ENCODE measurements at regions of chr4 and their contacts with region 1.

Region 1: GRCh38 chr4:129362674-129363274 is 266.8 kb downstream of the C4orf33 start:
- DNase-seq: peak; percentile 57
- ATAC-seq: peak; percentile 63; the same call in 1 of the 2 replicates
- H3K4me3 ChIP-seq: no peak overlapping the region
- H3K27ac ChIP-seq: no peak overlapping the region
- H3K4me1 ChIP-seq: peaks cover 8 to 9% of the 10 kb centered on the region in 2 experiments; a peak in 3 of 4 replicates
- H3K27me3 ChIP-seq: no peaks in the 10 kb centered on the region
- CTCF ChIP-seq: peak; percentile 45 to 88 (median 69); a peak in 5 of 6 replicates
- POLR2A ChIP-seq: no peak
- RAD21 ChIP-seq: peak; percentile 86

Region 2: GRCh38 chr4:129641179-129641578 is 278.4 kb after region 1 on chr4:
- CTCF ChIA-PET with region 1: interaction called, 12 read pairs
- POLR2A ChIA-PET with region 1: no interaction called
- RAD21 ChIA-PET with region 1: interaction called in 1 of 2 experiments, 3 read pairs
- intact Hi-C with region 1: loop called (anchors 1 kb)
- DNase-seq: peak; percentile 42
- ATAC-seq: peak; percentile 75
- H3K4me3 ChIP-seq: no peak overlapping the region
- H3K27ac ChIP-seq: no peak overlapping the region
- H3K4me1 ChIP-seq: no peaks in the 10 kb centered on the region
- H3K27me3 ChIP-seq: no peaks in the 10 kb centered on the region
- CTCF ChIP-seq: peak; percentile 56 to 86 (median 74); a peak in 5 of 6 replicates
- POLR2A ChIP-seq: no peak
- RAD21 ChIP-seq: peak; percentile 55

Region 3: DNA sequence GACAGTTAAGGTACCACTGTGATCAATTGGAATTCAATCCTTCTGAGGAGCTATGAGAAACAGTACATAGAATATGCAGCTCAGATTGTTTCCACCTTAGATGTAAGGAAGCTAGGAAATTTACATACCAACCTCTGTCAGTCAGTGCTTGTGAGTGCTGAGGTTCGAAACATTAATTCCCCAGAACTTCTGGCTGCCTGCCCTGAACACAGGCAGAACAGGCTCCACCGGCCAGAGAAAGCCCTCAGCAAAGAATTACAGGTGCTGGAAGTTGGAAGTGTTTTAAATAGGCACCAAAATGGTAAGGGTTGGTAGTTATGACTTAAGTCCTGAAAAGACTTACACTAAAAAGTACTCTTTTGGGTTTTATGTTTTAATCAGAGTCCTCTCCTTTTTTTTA is 385.0 kb after region 1 on chr4:
- CTCF ChIA-PET with region 1: interaction called, 4 read pairs
- POLR2A ChIA-PET with region 1: no interaction called
- RAD21 ChIA-PET with region 1: no interaction called
- intact Hi-C with region 1: loop called (anchors 10 kb)
- DNase-seq: no peak
- ATAC-seq: no peak
- H3K4me3 ChIP-seq: no peak overlapping the region
- H3K27ac ChIP-seq: no peak overlapping the region
- H3K4me1 ChIP-seq: no peaks in the 10 kb centered on the region
- H3K27me3 ChIP-seq: no peaks in the 10 kb centered on the region
- CTCF ChIP-seq: no peak
- POLR2A ChIP-seq: no peak
- RAD21 ChIP-seq: no peak

Region 4: GRCh38 chr4:129929052-129929451 is 566.3 kb after region 1 on chr4:
- CTCF ChIA-PET with region 1: interaction called, 7 read pairs
- POLR2A ChIA-PET with region 1: no interaction called
- RAD21 ChIA-PET with region 1: no interaction called
- intact Hi-C with region 1: loop called (anchors 10 kb)
- DNase-seq: no peak
- ATAC-seq: peak; percentile 73
- H3K4me3 ChIP-seq: no peak overlapping the region
- H3K27ac ChIP-seq: no peak overlapping the region
- H3K4me1 ChIP-seq: no peaks in the 10 kb centered on the region
- H3K27me3 ChIP-seq: no peaks in the 10 kb centered on the region
- CTCF ChIP-seq: peak in 2 of 3 experiments; percentile 49 to 58; a peak in 4 of 6 replicates
- POLR2A ChIP-seq: no peak
- RAD21 ChIP-seq: peak; percentile 28; the same call in 1 of the 2 replicates

Region 5: DNA sequence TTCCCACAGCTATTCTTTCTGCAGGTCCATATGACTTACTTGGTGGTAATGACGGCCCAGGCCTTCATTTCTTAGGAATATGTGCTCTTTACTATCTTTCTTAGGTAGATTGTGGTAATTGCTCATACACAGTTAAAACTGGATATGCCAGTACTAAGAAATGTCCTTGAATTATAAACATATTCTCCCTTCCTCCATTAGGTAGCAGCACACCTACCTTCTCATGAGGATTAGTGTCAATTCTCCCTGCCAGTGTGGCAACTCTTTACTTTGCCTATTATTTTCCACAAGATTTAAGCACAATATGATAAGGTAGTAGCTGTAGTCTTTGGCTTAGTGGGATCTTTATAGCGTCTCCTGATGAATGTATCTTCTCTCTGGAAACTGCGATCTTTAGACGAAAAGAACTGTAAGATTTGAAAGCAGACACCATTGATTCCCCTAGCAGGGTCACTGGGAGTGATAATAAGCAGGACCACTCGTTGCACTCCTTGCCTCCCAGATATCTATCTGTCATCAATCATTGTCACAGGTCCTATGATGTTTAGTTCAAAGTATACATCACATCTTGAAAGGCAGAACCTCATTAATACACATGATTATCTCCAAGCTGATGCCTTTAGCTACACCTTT is 973.9 kb after region 1 on chr4:
- CTCF ChIA-PET with region 1: no interaction called
- POLR2A ChIA-PET with region 1: no interaction called
- RAD21 ChIA-PET with region 1: no interaction called
- intact Hi-C with region 1: loop called (anchors 10 kb)
- DNase-seq: peak; percentile 26
- ATAC-seq: peak; percentile 82
- H3K4me3 ChIP-seq: no peak overlapping the region
- H3K27ac ChIP-seq: no peak overlapping the region
- H3K4me1 ChIP-seq: no peaks in the 10 kb centered on the region
- H3K27me3 ChIP-seq: no peaks in the 10 kb centered on the region
- CTCF ChIP-seq: peak in 2 of 3 experiments; percentile 59 to 70; a peak in 4 of 6 replicates
- POLR2A ChIP-seq: no peak
- RAD21 ChIP-seq: peak; percentile 45

Region 6: GRCh38 chr4:130808492-130808891 is 1445.7 kb after region 1 on chr4:
- CTCF ChIA-PET with region 1: no interaction called
- POLR2A ChIA-PET with region 1: no interaction called
- RAD21 ChIA-PET with region 1: no interaction called
- intact Hi-C with region 1: loop called (anchors 1 kb)
- DNase-seq: peak; percentile 35
- ATAC-seq: peak; percentile 78
- H3K4me3 ChIP-seq: no peak overlapping the region
- H3K27ac ChIP-seq: no peak overlapping the region
- H3K4me1 ChIP-seq: no peaks in the 10 kb centered on the region
- H3K27me3 ChIP-seq: no peaks in the 10 kb centered on the region
- CTCF ChIP-seq: peak; percentile 45 to 76 (median 63); a peak in 5 of 6 replicates
- POLR2A ChIP-seq: no peak
- RAD21 ChIP-seq: peak; percentile 55

Region 7: GRCh38 chr4:131084997-131085396 is 1722.2 kb after region 1 on chr4:
- CTCF ChIA-PET with region 1: no interaction called
- POLR2A ChIA-PET with region 1: no interaction called
- RAD21 ChIA-PET with region 1: no interaction called
- intact Hi-C with region 1: loop called (anchors 10 kb)
- DNase-seq: no peak
- ATAC-seq: no peak
- H3K4me3 ChIP-seq: no peak overlapping the region
- H3K27ac ChIP-seq: no peak overlapping the region
- H3K4me1 ChIP-seq: no peaks in the 10 kb centered on the region
- H3K27me3 ChIP-seq: no peaks in the 10 kb centered on the region
- CTCF ChIP-seq: no peak
- POLR2A ChIP-seq: no peak
- RAD21 ChIP-seq: no peak

Measured in HCT116 (cell line).